ENCODE measurements at regions of chr21 and their contacts with region 1.

Region 1: GRCh38 chr21:35400233-35400957 is 351.3 kb upstream of the RUNX1 start:
- DNase-seq: no peak
- H3K4me3 ChIP-seq: no peak overlapping the region
- CTCF ChIP-seq: peak; percentile 38

Region 2: GRCh38 chr21:35051287-35051818 is 349.0 kb before region 1 on chr21:
- CTCF ChIA-PET with region 1: interaction called, 27 read pairs
- POLR2A ChIA-PET with region 1: no interaction called
- DNase-seq: no peak
- H3K4me3 ChIP-seq: no peak overlapping the region
- CTCF ChIP-seq: peak; percentile 56

Measured in AG04449 (cell line).